AG04449 (cell line): ENCODE measurements at regions of chrX and their contacts with region 1.

Region 1: DNA sequence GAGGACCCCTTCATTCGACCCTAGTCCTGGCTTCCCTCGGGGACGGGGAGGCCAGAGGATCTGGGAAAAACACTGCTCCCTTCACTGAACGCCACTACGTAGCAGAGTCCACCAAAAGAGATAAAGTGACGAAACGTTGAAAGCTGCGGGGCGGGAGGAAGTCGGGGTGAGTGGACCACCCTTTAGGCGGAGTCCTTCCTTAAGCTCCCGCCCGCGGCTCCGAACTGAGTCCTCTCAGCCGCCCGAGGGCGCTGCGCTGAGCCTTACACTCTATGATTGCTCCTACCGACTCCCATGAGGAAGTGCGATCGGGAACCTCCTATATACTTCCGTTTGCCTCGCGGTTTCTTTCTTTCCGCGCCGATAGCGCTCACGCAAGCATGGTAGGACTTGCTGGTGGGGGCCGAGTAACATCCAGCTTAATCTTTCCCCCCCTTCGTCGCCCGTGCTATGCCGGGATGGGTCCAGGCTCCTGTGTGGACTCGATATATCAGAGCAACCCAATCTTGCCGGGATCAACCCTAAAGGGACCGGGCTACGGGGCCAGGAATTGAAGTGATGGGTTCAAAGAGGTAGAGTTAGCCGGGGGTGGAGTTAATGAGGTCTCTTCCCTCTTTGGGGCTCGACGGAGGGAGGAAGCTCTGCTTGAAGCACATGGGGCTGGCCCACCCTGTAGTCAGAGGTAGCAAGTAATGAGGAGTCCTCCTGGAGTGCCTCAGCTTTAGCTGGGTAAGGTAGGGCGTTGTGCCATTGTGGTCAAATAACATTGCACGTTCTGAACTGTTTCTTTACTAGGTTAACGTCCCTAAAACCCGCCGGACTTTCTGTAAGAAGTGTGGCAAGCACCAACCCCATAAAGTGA is at the start of gene RPL36A:
- DNase-seq: peak; percentile 49
- H3K4me3 ChIP-seq: peak within 1 kb of the TSS; percentile 74
- CTCF ChIP-seq: peak; percentile 77

Region 2: GRCh38 chrX:101348452-101349192 is 42.3 kb before region 1 on chrX and contains the start of gene TIMM8A:
- CTCF ChIA-PET with region 1: interaction called, 4 read pairs
- POLR2A ChIA-PET with region 1: interaction called, 11 read pairs
- DNase-seq: no peak
- H3K4me3 ChIP-seq: peak within 1 kb of the TSS; percentile 80
- CTCF ChIP-seq: no peak

Region 3: GRCh38 chrX:101407748-101408531 is 17.0 kb after region 1 on chrX and contains the starts of genes GLA and HNRNPH2:
- CTCF ChIA-PET with region 1: interaction called, 11 read pairs
- POLR2A ChIA-PET with region 1: interaction called, 17 read pairs
- DNase-seq: peak; percentile 97
- H3K4me3 ChIP-seq: peak within 1 kb of the TSS; percentile 80
- CTCF ChIP-seq: peak; percentile 11